Posterior vena cava (tissue), 2 donors: ENCODE measurements at regions of chr22 and their contacts with region 1.

Region 1: DNA sequence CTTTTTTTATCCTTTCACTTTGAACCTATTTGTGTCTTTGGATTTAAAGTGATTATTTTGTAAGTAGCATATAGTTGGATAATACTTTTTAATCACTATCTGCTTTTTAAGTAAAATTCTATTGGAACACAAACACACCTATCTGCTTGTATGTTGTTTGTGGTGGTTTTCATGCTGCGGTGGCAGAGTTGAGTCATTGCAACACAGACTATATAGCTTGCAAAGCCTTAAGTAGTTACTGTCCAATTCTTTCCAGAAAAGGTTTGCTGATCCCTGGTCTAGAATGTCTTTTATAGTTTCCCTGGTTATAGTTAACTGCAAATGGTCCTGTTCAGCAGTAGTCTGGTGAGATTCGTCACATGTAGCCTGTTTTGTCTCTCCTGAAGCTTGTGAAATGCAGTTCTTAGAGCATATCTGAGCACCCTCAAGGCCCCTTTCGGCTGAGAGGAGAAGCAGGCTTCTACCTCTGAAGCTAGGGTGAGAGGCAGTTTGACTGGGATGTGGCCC is 21.5 kb downstream of the SHANK3 start:
- DNase-seq: no peak

Region 2: GRCh38 chr22:50683086-50683993 is 10.8 kb before region 1 on chr22:
- intact Hi-C with region 1: no loop called
- DNase-seq: peak; percentile 46

Region 3: GRCh38 chr22:50708996-50709712 is 15.0 kb after region 1 on chr22:
- intact Hi-C with region 1: loop called in 1 of 2 experiments (anchors 1 kb)
- DNase-seq: peak; percentile 36